Naive thymus-derived CD4-positive, alpha-beta T cell (primary cell): ENCODE measurements at regions of chr10 and their contacts with region 1.

Region 1: DNA sequence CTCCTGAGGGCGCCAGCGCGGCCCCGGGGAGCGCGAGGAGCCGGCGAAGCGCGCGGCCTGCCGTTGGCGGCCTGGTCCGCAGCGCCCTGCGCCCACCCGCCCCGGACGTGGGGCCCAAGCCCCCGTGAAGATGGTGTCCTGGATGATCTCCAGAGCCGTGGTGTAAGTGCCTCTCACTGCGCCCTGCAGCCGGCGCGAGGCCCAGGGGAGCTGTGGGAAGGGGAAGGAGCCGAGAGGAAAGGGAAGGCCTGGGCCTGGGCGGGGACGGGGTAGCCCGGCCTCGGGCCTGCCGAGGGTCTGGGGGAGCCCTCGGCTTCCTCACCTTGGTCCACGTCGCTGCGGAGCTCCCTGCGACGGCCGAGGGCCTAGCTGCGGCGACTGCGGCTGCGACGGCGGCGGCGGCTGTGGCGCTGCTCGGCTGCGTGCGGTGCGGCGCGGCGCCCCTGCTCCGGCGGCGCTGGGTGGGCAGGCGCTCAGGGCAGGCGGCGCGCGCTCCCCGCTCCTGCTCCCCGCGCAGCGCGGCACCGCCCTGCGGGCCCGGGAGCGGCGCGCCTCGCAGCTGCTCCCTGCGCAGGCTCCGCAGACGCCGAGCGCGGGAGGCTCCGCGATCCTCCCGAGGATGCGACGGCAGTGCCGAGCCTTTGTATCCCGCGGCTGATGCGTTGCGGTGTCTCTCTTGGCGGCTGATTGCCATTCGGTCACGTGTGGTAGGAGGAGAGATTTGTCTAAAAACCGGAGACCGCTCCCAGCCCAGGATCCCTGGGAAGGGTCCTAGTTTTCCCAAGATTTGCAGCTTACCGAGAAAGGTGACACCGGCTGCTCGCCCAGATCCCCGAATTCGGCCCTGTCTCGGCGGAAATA is 445 bp downstream of the REEP3 start:
- DNase-seq: peak; percentile 45 to 70 (median 61)
- ATAC-seq: peak; percentile 78
- H3K4me3 ChIP-seq: peak overlapping the region; percentile 83
- H3K4me3 Mint-ChIP-seq: peak overlapping the region; percentile 72 to 92 (median 88)
- H3K27ac ChIP-seq: peak overlapping the region; percentile 86
- H3K27ac Mint-ChIP-seq: peak overlapping the region; percentile 81 to 95 (median 86)
- H3K4me1 ChIP-seq: peaks cover 4 to 30% of the 10 kb centered on the region in 2 donors
- H3K4me1 Mint-ChIP-seq: peaks cover 36 to 80% (median 67%) of the 10 kb centered on the region in 7 donors
- H3K27me3 ChIP-seq: no peaks in the 10 kb centered on the region
- H3K27me3 Mint-ChIP-seq: no peaks in the 10 kb centered on the region

Region 2: DNA sequence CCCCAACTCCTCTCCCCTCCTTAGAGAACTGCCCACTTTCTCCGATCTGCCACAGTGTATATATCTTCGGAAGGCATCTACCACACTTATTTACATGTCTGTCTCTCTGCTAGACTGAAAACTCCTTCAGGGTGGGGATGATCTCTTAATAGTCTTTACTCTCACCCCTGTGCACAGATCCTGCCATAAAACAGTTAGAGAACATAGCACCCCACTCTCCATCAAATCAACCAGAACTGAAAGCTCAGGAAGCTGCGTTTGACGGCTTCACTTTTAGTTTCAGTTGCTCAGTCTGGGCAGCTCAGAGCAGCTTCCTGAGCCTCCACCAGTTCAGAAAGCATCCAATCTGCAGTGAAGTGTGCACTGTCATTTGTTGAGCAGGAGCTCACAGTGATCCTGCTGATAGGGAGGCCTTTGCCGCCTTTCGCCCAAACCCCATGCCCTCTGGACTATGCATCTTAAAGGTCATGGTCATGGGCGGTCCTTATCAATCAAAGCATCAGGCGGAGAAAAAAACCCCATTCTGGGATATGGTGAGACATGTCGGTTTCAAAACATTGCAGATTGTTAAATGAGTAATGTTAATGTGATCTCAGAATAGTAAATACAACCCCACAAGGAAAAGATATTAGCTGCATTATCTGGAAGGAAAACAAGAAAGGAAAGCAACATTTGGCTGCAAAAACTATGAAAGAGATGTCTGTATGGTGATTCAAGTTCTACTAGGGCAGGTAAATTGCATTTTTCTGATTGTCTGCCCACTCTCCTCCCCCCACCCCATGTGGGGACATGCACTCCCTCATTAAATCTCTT is 884.2 kb before region 1 on chr10:
- CTCF ChIA-PET with region 1: no interaction called
- POLR2A ChIA-PET with region 1: interaction called, 3 read pairs
- intact Hi-C with region 1: loop called in 1 of 2 experiments (anchors 10 kb)
- DNase-seq: peak; percentile 32 to 82 (median 75)
- ATAC-seq: peak; percentile 86
- H3K4me3 ChIP-seq: peak overlapping the region; percentile 67
- H3K4me3 Mint-ChIP-seq: no peak overlapping the region
- H3K27ac ChIP-seq: peak overlapping the region; percentile 70
- H3K27ac Mint-ChIP-seq: no peak overlapping the region
- H3K4me1 ChIP-seq: peaks cover 18 to 41% of the 10 kb centered on the region in 2 donors
- H3K4me1 Mint-ChIP-seq: peaks cover 2 to 38% (median 6%) of the 10 kb centered on the region in 7 donors
- H3K27me3 ChIP-seq: no peaks in the 10 kb centered on the region
- H3K27me3 Mint-ChIP-seq: no peaks in the 10 kb centered on the region

Region 3: DNA sequence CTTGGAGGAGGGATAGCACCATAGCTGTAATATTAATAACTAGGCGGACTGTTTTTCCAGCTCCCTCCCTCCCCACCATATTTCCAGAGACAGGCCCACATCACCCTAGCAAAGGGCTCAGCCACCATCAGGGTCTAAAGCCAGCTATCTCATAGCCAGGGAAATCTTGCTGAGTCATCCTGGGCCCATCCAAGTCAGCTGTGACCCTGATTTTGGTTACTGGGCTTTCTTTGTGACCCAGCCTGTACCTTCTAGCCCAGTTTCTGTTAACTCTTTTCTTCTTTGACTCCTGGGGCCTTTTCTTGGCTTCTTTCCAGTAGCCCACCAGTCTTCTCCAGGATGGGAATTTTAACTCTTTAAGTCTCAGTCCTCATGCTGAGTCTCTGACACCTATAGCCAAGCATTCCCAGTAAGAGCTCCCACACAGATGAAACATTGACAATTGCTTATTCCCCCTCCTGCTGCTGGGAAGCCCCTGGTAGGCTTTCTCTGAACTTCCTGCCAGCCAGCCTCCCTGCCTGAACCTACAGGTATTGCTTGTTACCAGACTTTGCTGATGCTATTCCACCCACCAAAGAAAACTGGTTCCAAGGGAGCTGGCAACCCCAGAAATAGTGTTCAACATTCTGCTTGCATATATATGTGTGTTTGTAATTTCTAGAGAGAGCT is 751.9 kb before region 1 on chr10:
- CTCF ChIA-PET with region 1: no interaction called
- POLR2A ChIA-PET with region 1: no interaction called
- intact Hi-C with region 1: no loop called
- DNase-seq: no peak
- ATAC-seq: no peak
- H3K4me3 ChIP-seq: no peak overlapping the region
- H3K4me3 Mint-ChIP-seq: no peak overlapping the region
- H3K27ac ChIP-seq: no peak overlapping the region
- H3K27ac Mint-ChIP-seq: no peak overlapping the region
- H3K4me1 ChIP-seq: no peaks in the 10 kb centered on the region
- H3K4me1 Mint-ChIP-seq: peaks cover 3 to 15% (median 7%) of the 10 kb centered on the region in 7 donors
- H3K27me3 ChIP-seq: no peaks in the 10 kb centered on the region
- H3K27me3 Mint-ChIP-seq: peaks cover 0 to 12% (median 5%) of the 10 kb centered on the region in 5 donors

Region 4: GRCh38 chr10:63054889-63055611 is 466.6 kb before region 1 on chr10:
- CTCF ChIA-PET with region 1: no interaction called
- POLR2A ChIA-PET with region 1: no interaction called
- intact Hi-C with region 1: no loop called
- DNase-seq: no peak
- ATAC-seq: no peak
- H3K4me3 ChIP-seq: no peak overlapping the region
- H3K4me3 Mint-ChIP-seq: no peak overlapping the region
- H3K27ac ChIP-seq: no peak overlapping the region
- H3K27ac Mint-ChIP-seq: no peak overlapping the region
- H3K4me1 ChIP-seq: no peaks in the 10 kb centered on the region
- H3K4me1 Mint-ChIP-seq: no peaks in the 10 kb centered on the region
- H3K27me3 ChIP-seq: no peaks in the 10 kb centered on the region
- H3K27me3 Mint-ChIP-seq: peaks cover under 1 to 14% (median 9%) of the 10 kb centered on the region in 5 donors

Region 5: DNA sequence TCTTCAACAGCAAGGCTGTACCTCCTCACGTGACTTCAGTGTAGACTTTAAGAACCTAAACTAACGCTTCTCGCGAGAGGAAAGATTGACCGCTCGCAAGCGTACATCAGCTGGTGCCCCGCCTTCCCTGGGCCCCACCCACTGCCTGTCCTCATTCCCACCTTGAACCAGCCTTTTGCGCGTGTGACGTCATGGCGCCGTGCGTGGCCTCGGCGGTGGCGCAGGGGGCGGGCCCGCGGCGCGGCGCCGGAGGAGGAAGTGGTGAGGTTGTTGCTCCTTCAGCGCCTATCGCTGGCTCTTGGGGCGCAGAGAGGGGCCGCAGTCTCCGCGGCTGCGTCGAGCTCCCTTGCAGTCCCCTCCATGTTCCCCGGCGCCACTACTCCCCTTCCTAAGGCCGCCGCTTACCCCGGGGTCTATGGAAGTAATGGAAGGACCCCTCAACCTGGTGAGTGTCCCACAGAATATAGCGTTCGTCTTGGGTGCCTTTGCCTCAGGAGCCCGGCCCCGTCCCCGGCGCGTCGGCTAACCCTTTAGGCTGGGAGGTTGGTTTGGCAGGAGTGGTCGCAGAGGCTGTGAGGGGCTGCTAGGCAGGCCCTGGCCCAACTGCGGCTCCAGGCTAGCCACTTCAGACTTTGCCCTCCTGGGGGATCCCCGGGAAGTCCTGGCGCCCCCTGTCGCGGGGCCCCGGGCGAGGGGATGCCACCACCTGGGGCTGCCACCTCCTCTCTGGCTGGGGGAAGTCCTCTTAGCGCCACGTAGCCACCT is 388.4 kb before region 1 on chr10 and contains the start of gene NRBF2:
- CTCF ChIA-PET with region 1: no interaction called
- POLR2A ChIA-PET with region 1: interaction called, 3 read pairs
- intact Hi-C with region 1: loop called (anchors 1 kb)
- DNase-seq: peak; percentile 96 to 98 (median 98)
- ATAC-seq: peak; percentile 94
- H3K4me3 ChIP-seq: peak within 1 kb of the TSS; percentile 81
- H3K4me3 Mint-ChIP-seq: peak within 1 kb of the TSS; percentile 75 to 94 (median 92)
- H3K27ac ChIP-seq: peak within 1 kb of the TSS; percentile 98
- H3K27ac Mint-ChIP-seq: peak within 1 kb of the TSS; percentile 89 to 98 (median 96)
- H3K4me1 ChIP-seq: peaks cover 17 to 30% of the 10 kb centered on the region in 2 donors
- H3K4me1 Mint-ChIP-seq: peaks cover 10 to 49% (median 32%) of the 10 kb centered on the region in 7 donors
- H3K27me3 ChIP-seq: no peaks in the 10 kb centered on the region
- H3K27me3 Mint-ChIP-seq: no peaks in the 10 kb centered on the region
- total RNA-seq, gene NRBF2: 14.5 to 26.0 (median 19.2) TPM

Region 6: GRCh38 chr10:63217120-63217605 is 304.5 kb before region 1 on chr10:
- CTCF ChIA-PET with region 1: interaction called, 4 read pairs
- POLR2A ChIA-PET with region 1: interaction called, 3 read pairs
- intact Hi-C with region 1: loop called in 1 of 2 experiments (anchors 1 kb)
- DNase-seq: peak in 7 of 9 donors; percentile 45 to 72 (median 61)
- ATAC-seq: peak; percentile 86
- H3K4me3 ChIP-seq: no peak overlapping the region
- H3K4me3 Mint-ChIP-seq: peak overlapping the region in 7 of 10 donors; percentile 2 to 56 (median 35)
- H3K27ac ChIP-seq: no peak overlapping the region
- H3K27ac Mint-ChIP-seq: peak overlapping the region in 8 of 9 donors; percentile 29 to 88 (median 56)
- H3K4me1 ChIP-seq: peaks cover 17 to 24% of the 10 kb centered on the region in 2 donors
- H3K4me1 Mint-ChIP-seq: peaks cover 38 to 64% (median 61%) of the 10 kb centered on the region in 7 donors
- H3K27me3 ChIP-seq: no peaks in the 10 kb centered on the region
- H3K27me3 Mint-ChIP-seq: no peaks in the 10 kb centered on the region

Region 7: GRCh38 chr10:63388421-63389031 is 133.1 kb before region 1 on chr10:
- CTCF ChIA-PET with region 1: no interaction called
- POLR2A ChIA-PET with region 1: no interaction called
- intact Hi-C with region 1: loop called in 1 of 2 experiments (anchors 2 kb)
- DNase-seq: peak in 6 of 9 donors; percentile 20 to 60 (median 47)
- ATAC-seq: peak; percentile 77
- H3K4me3 ChIP-seq: peak overlapping the region; percentile 36
- H3K4me3 Mint-ChIP-seq: peak overlapping the region; percentile 42 to 81 (median 72)
- H3K27ac ChIP-seq: peak overlapping the region; percentile 5
- H3K27ac Mint-ChIP-seq: peak overlapping the region; percentile 21 to 76 (median 49)
- H3K4me1 ChIP-seq: peaks cover 12 to 21% of the 10 kb centered on the region in 2 donors
- H3K4me1 Mint-ChIP-seq: peaks cover 45 to 79% (median 69%) of the 10 kb centered on the region in 7 donors
- H3K27me3 ChIP-seq: no peaks in the 10 kb centered on the region
- H3K27me3 Mint-ChIP-seq: no peaks in the 10 kb centered on the region

Region 8: GRCh38 chr10:63506554-63506953 is 15.1 kb before region 1 on chr10:
- CTCF ChIA-PET with region 1: interaction called, 4 read pairs
- POLR2A ChIA-PET with region 1: interaction called, 3 read pairs
- intact Hi-C with region 1: loop called in 1 of 2 experiments (anchors 2 kb)
- DNase-seq: no peak
- ATAC-seq: no peak
- H3K4me3 ChIP-seq: no peak overlapping the region
- H3K4me3 Mint-ChIP-seq: no peak overlapping the region
- H3K27ac ChIP-seq: no peak overlapping the region
- H3K27ac Mint-ChIP-seq: no peak overlapping the region
- H3K4me1 ChIP-seq: no peaks in the 10 kb centered on the region
- H3K4me1 Mint-ChIP-seq: peaks cover 21 to 58% (median 42%) of the 10 kb centered on the region in 7 donors
- H3K27me3 ChIP-seq: no peaks in the 10 kb centered on the region
- H3K27me3 Mint-ChIP-seq: no peaks in the 10 kb centered on the region

Region 9: DNA sequence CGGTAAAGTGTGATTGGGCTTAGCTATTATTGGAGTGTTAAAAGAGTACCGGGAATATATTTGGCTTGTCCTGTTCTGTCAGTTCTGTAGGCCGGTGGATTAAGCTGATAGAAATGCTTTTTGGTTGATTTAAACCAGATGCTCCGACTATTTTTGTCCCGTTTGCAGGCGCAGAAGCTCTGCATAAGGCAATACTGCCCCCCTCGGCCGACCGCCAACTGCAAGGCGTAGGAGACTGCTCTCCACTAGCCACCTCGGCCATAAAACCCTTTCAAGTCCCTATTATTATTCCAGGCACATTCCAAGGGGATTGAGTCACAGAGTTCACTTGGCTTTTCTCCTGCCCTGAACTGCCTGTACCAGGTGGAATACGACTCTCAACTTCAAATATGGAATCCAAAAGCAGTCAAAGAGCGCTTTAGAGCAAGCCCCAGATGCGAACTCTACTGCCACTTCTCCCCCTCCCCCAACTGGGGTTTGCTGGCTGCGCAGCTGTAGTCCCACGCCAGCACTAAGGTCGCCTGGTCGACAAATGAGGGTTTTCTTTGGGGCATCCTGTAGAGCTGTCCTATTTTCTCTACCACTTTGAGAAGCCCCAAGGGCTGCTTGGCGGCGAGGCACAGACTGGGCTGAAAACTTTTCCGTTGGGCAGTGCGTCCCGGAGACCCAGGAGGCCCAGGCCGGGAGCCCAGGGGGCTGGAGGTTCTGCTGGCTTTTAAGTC is 107.9 kb after region 1 on chr10:
- CTCF ChIA-PET with region 1: no interaction called
- POLR2A ChIA-PET with region 1: interaction called, 5 read pairs
- intact Hi-C with region 1: loop called (anchors 1 kb)
- DNase-seq: peak; percentile 61 to 81 (median 78)
- ATAC-seq: peak; percentile 81
- H3K4me3 ChIP-seq: peak overlapping the region; percentile 90
- H3K4me3 Mint-ChIP-seq: peak overlapping the region; percentile 87 to 98 (median 95)
- H3K27ac ChIP-seq: peak overlapping the region; percentile 69
- H3K27ac Mint-ChIP-seq: peak overlapping the region; percentile 79 to 95 (median 90)
- H3K4me1 ChIP-seq: peaks cover 0 to 17% of the 10 kb centered on the region in 2 donors
- H3K4me1 Mint-ChIP-seq: peaks cover 19 to 40% (median 26%) of the 10 kb centered on the region in 7 donors
- H3K27me3 ChIP-seq: no peaks in the 10 kb centered on the region
- H3K27me3 Mint-ChIP-seq: peaks cover 0 to 3% (median 0%) of the 10 kb centered on the region in 5 donors